ENCODE measurements at regions of chr6 and their contacts with region 1.

Region 1: DNA sequence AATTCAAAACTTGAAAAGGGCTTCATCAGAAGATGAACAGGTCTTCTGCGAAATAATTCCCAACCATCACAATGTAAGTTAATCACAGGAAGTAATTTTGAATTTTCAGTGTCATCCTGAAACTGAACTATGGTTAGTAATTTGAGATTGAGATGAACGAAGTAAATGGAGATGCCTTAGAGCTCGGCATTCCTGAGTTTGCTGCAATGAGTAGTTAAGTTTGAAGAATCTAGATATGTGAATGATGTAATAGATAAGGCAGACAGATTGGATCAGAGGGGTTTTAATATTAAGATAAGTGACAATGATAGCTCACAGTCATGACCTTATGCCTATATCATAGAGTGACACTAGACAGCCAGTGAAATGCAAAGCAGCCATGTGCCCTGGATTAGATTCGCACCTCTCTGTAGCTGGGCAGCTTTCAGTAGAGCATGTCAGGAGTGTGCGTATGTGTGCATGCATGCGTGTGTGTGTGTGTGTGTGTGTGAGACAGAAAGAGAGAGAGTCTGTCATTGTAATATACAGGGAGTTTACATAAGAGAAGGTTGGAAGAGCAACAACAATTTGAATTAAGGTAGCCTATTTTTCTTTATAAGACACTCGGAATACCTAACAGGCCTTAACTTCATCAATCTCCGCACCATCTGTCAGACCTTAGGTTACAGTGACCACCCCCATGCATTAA is 233.0 kb downstream of the GMPR start:
- DNase-seq: no peak
- ATAC-seq: no peak
- H3K4me3 ChIP-seq: no peak overlapping the region
- H3K4me3 Mint-ChIP-seq: peak overlapping the region in 1 of 10 donors; percentile 43
- H3K27ac ChIP-seq: no peak overlapping the region
- H3K27ac Mint-ChIP-seq: peak overlapping the region in 5 of 9 donors; percentile 6 to 68 (median 22)
- H3K4me1 ChIP-seq: peaks cover 25 to 48% of the 10 kb centered on the region in 2 donors
- H3K4me1 Mint-ChIP-seq: peaks cover 23 to 70% (median 37%) of the 10 kb centered on the region in 7 donors
- H3K27me3 ChIP-seq: no peaks in the 10 kb centered on the region
- H3K27me3 Mint-ChIP-seq: no peaks in the 10 kb centered on the region

Region 2: DNA sequence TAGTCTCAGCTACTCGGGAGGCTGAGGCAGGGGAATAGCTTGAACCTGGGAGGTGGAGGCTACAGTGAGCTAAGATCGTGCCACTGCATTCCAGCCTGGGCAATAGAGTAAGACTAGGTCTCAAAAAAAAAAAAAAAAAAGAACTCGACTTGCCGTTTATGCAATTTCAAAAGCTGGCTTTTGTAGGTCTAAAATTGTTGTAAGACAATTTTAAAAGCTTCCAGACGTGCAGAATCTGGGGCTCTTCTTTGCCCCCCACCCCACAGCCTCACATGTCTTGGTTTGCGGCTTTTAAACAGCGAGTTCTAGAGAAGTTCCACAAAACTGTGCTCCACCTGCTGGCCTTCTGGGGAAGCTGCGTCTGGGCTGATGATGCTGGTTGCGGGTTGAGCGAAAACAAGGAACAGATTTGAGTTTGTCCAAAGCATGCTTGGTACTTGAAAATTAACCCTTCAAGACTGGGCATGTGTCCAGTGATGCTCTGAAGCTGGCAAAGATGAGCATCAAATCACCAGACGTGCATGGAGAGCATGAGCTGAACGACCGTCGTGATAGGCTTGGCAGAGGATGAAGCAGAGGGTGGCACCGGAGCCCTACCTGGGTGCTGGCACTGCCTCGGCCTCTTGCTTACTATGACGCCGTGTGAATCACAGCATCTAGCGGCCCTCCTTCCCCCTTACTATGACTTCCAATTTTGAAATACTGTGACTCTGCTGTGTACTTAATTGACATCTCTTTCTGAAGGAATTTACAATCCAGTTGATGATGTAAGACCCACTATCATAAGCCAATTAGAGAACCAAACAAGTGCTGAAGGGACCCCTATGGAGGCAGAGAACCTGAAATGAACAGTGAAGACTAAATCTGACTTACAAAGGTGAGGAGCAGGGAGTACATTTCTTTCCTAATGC is 61.6 kb before region 1 on chr6:
- CTCF ChIA-PET with region 1: no interaction called
- POLR2A ChIA-PET with region 1: no interaction called
- intact Hi-C with region 1: loop called in 1 of 2 experiments (anchors 2 kb)
- DNase-seq: peak; percentile 3 to 45 (median 29)
- ATAC-seq: peak; percentile 78
- H3K4me3 ChIP-seq: no peak overlapping the region
- H3K4me3 Mint-ChIP-seq: peak overlapping the region in 6 of 10 donors; percentile 11 to 46 (median 29)
- H3K27ac ChIP-seq: no peak overlapping the region
- H3K27ac Mint-ChIP-seq: peak overlapping the region in 2 of 9 donors; percentile 34 to 45
- H3K4me1 ChIP-seq: peaks cover 0 to 8% of the 10 kb centered on the region in 2 donors
- H3K4me1 Mint-ChIP-seq: peaks cover 7 to 61% (median 20%) of the 10 kb centered on the region in 7 donors
- H3K27me3 ChIP-seq: no peaks in the 10 kb centered on the region
- H3K27me3 Mint-ChIP-seq: no peaks in the 10 kb centered on the region

Region 3: GRCh38 chr6:16437984-16438383 is 33.4 kb before region 1 on chr6:
- CTCF ChIA-PET with region 1: no interaction called
- POLR2A ChIA-PET with region 1: no interaction called
- intact Hi-C with region 1: loop called in 1 of 2 experiments (anchors 1 kb)
- DNase-seq: no peak
- ATAC-seq: peak; percentile 45
- H3K4me3 ChIP-seq: peak overlapping the region; percentile 40
- H3K4me3 Mint-ChIP-seq: peak overlapping the region in 3 of 10 donors; percentile 8 to 77 (median 17)
- H3K27ac ChIP-seq: no peak overlapping the region
- H3K27ac Mint-ChIP-seq: peak overlapping the region in 1 of 9 donors; percentile 91
- H3K4me1 ChIP-seq: peaks cover 15 to 39% of the 10 kb centered on the region in 2 donors
- H3K4me1 Mint-ChIP-seq: peaks cover 21 to 76% (median 45%) of the 10 kb centered on the region in 7 donors
- H3K27me3 ChIP-seq: no peaks in the 10 kb centered on the region
- H3K27me3 Mint-ChIP-seq: no peaks in the 10 kb centered on the region

Region 4: GRCh38 chr6:16514249-16514648 is 42.9 kb after region 1 on chr6:
- CTCF ChIA-PET with region 1: no interaction called
- POLR2A ChIA-PET with region 1: interaction called, 3 read pairs
- intact Hi-C with region 1: loop called (anchors 5 kb)
- DNase-seq: peak in 6 of 9 donors; percentile 16 to 31 (median 24)
- ATAC-seq: peak; percentile 59
- H3K4me3 ChIP-seq: no peak overlapping the region
- H3K4me3 Mint-ChIP-seq: peak overlapping the region in 1 of 10 donors; percentile 41
- H3K27ac ChIP-seq: no peak overlapping the region
- H3K27ac Mint-ChIP-seq: peak overlapping the region in 7 of 9 donors; percentile 10 to 56 (median 40)
- H3K4me1 ChIP-seq: peaks cover 14 to 29% of the 10 kb centered on the region in 2 donors
- H3K4me1 Mint-ChIP-seq: peaks cover 29 to 73% (median 58%) of the 10 kb centered on the region in 7 donors
- H3K27me3 ChIP-seq: no peaks in the 10 kb centered on the region
- H3K27me3 Mint-ChIP-seq: no peaks in the 10 kb centered on the region